Common myeloid progenitor, CD34-positive (primary cell): ENCODE measurements at regions of chr14 and their contacts with region 1.

Region 1: DNA sequence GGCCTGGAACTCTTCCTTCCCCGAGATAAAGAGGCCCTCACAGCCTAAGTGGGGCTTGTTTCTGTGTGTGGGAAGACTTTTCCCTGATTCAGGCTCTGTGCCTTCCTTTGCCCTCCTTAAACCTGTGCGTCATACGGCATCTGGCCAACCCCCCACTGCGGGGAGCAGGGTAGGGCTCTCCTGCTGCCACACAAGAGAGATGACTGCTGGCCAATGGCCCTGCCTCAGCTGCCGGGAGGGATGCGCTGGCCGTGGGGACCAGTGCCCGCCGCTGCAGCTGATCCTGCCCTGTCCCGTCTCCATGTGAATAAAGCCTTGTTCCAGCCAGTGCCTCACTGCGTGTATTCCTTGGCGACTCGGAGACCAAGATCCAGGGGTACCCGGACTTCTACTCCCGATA is 42.5 kb upstream of the BEGAIN start:
- DNase-seq: no peak
- H3K4me3 ChIP-seq: no peak overlapping the region
- H3K27ac ChIP-seq: no peak overlapping the region
- H3K4me1 ChIP-seq: peaks cover 0 to 4% (median 0%) of the 10 kb centered on the region in 4 experiments
- H3K27me3 ChIP-seq: no peaks in the 10 kb centered on the region

Region 2: GRCh38 chr14:100540141-100540925 is 89.4 kb before region 1 on chr14:
- CTCF ChIA-PET with region 1: no interaction called
- POLR2A ChIA-PET with region 1: no interaction called
- DNase-seq: peak in 2 of 3 donors; percentile 22 to 28
- H3K4me3 ChIP-seq: no peak overlapping the region
- H3K27ac ChIP-seq: no peak overlapping the region
- H3K4me1 ChIP-seq: peaks cover 0 to 5% (median 0%) of the 10 kb centered on the region in 4 experiments
- H3K27me3 ChIP-seq: peaks cover 0 to 2% (median 0%) of the 10 kb centered on the region in 5 experiments

Region 3: GRCh38 chr14:100599981-100600380 is 29.7 kb before region 1 on chr14:
- CTCF ChIA-PET with region 1: no interaction called
- POLR2A ChIA-PET with region 1: no interaction called
- DNase-seq: peak in 2 of 3 donors; percentile 31 to 48
- H3K4me3 ChIP-seq: no peak overlapping the region
- H3K27ac ChIP-seq: no peak overlapping the region
- H3K4me1 ChIP-seq: peaks cover 0 to 15% (median 10%) of the 10 kb centered on the region in 4 experiments
- H3K27me3 ChIP-seq: peaks cover 0 to 5% (median 0%) of the 10 kb centered on the region in 5 experiments

Region 4: DNA sequence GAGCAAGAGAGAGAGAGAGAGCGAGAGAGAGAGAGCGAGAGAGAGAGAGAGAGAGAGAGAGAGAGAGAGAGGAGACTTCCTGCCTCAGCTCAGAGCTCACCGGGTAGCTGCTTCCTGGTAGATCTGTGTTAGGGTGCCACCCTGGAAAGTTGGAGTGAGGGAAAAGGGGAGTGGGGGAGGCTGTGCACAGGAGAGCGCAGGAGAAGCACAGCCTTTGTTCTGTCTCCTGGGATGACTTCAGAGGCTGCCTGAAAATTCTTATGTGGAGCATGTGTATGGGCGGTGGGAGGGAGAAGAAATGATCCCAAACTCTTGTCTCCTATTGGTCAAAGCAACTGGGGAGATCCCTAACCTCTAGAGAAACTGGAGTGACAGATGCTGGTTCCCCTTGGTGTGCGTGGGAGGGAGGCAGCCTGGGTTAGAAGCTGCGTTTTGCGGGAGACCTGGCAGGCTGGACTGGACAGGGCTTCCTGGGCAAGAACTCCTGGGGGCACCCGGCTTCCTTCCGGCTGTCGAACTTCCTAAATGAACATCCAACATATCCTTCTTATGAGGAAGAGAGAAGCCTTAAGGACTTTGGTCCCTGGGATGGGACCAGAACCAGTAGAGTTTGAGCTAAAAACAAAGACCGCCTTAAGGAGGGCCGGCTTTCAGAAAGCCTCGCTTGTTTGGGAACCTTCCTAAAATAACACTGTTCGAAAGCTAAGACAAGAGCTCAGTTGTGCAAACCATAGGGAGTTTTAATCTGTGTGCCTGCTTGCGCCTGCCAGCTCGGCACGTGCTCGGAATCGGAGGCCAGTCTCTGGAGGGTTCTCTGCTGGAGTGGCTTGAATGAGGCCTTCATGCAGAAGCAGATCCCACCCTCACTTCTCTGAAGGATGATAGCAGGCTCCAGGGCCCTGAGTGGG is 12.0 kb before region 1 on chr14:
- CTCF ChIA-PET with region 1: interaction called, 7 read pairs
- POLR2A ChIA-PET with region 1: interaction called, 11 read pairs
- DNase-seq: peak in 1 of 3 donors; percentile 65
- H3K4me3 ChIP-seq: no peak overlapping the region
- H3K27ac ChIP-seq: no peak overlapping the region
- H3K4me1 ChIP-seq: peaks cover 10 to 48% (median 34%) of the 10 kb centered on the region in 4 experiments
- H3K27me3 ChIP-seq: no peaks in the 10 kb centered on the region

Region 5: DNA sequence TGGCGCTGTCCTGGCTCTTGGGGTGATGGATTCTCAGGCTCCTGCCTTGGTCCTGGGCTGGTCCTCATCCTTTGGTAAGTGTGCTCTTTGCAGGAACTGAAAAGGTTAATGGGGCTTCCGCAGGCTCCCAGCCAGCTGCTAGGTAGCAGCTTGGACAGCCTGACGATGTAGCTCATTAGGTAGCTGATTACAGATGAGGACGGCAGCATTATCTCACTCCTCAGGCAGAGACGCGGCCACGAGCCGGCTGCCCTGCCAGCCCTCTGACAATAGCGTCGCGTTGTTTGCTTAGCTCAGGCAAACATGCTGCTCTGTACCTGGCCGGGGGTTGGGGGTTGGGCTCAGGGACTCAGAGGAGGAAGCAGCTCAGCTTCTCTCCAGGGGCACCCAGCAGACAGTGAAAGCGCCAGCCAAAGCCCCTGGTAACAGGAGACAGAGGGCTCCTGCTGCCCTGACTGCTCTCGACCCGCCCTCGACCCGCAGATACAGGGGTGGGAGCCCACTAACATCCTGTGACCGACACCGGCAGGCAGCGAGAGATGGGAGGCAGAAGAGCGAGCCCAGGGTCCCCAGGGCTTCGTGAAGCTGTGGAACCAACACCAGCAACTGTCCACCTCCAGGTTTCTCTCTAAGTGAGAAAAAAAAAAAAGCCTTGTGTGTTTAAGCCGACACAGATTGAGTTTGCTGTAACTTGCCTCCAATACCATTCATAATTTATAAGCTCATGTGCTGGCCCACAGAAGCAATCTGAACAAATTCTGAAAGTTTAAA is 43.5 kb after region 1 on chr14:
- CTCF ChIA-PET with region 1: no interaction called
- POLR2A ChIA-PET with region 1: no interaction called
- DNase-seq: peak in 2 of 3 donors; percentile 46 to 58
- H3K4me3 ChIP-seq: peak overlapping the region in 2 of 7 experiments; percentile 26 to 42
- H3K27ac ChIP-seq: no peak overlapping the region
- H3K4me1 ChIP-seq: peaks cover 3 to 79% (median 71%) of the 10 kb centered on the region in 4 experiments
- H3K27me3 ChIP-seq: no peaks in the 10 kb centered on the region

Region 6: GRCh38 chr14:100747021-100747586 is 117.4 kb after region 1 on chr14:
- CTCF ChIA-PET with region 1: no interaction called
- POLR2A ChIA-PET with region 1: no interaction called
- DNase-seq: no peak
- H3K4me3 ChIP-seq: no peak overlapping the region
- H3K27ac ChIP-seq: no peak overlapping the region
- H3K4me1 ChIP-seq: no peaks in the 10 kb centered on the region
- H3K27me3 ChIP-seq: no peaks in the 10 kb centered on the region